ENCODE measurements at regions of chr2 and their contacts with region 1.

Region 1: DNA sequence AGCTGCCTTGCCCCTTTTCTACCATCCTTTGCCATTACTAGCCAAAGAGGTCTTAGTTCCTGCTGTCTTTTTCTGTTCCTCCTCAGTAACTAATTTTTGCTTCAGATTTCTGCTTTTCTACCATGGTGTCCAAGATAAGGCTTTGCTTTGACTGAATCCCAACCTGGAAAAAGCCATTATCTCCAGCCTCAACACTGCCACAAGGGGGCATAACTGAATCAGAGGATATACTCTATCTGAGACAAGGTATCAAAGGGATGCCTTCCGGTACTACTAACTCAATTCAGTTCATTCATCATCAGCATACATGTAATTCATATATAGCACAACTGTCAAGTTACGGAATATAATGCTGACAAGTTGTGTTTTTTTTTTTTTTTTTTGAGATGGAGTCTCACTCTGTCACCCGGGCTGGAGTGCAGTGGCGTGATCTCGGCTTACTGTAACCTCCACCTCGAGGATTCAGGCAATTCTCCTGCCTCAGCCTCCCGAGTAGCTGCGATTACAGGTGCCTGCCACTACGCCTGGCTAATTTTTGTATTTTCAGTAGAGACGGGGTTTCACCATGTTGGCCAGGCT is 11.4 kb downstream of the OSGEPL1 start:
- DNase-seq: no peak
- H3K4me3 ChIP-seq: no peak overlapping the region
- H3K27me3 ChIP-seq: no peaks in the 10 kb centered on the region
- CTCF ChIP-seq: peak; percentile 76

Region 2: GRCh38 chr2:189762551-189763298 is 11.6 kb after region 1 on chr2 and contains the start of gene OSGEPL1:
- CTCF ChIA-PET with region 1: interaction called, 11 read pairs
- POLR2A ChIA-PET with region 1: no interaction called
- DNase-seq: peak; percentile 47
- H3K4me3 ChIP-seq: peak within 1 kb of the TSS; percentile 76
- H3K27me3 ChIP-seq: no peaks in the 10 kb centered on the region
- CTCF ChIP-seq: peak; percentile 71
- polyA plus RNA-seq, gene OSGEPL1: 3.2 and 5.3 TPM in 2 replicates

Region 3: GRCh38 chr2:190069936-190070696 is 318.9 kb after region 1 on chr2:
- CTCF ChIA-PET with region 1: interaction called, 22 read pairs
- POLR2A ChIA-PET with region 1: no interaction called
- DNase-seq: peak; percentile 37
- H3K4me3 ChIP-seq: no peak overlapping the region
- H3K27me3 ChIP-seq: no peaks in the 10 kb centered on the region
- CTCF ChIP-seq: peak; percentile 58

Measured in BJ (cell line).